GM12878 (cell line): ENCODE measurements at regions of chr12 and their contacts with region 1.

Region 1: GRCh38 chr12:124453419-124454351 is 113.7 kb downstream of the NCOR2 start:
- DNase-seq: peak; percentile 72
- ATAC-seq: peak; percentile 82
- H3K4me3 ChIP-seq: peak overlapping the region; percentile 53
- H3K27ac ChIP-seq: peak overlapping the region; percentile 95
- H3K4me1 ChIP-seq: peaks cover 55% of the 10 kb centered on the region
- H3K27me3 ChIP-seq: no peaks in the 10 kb centered on the region
- CTCF ChIP-seq: peak in 2 of 3 experiments; percentile 16 to 19; a peak in 1 of 6 replicates
- EP300 ChIP-seq: peak in 1 of 2 experiments; percentile 62; a peak in 1 of 4 replicates
- POLR2A ChIP-seq: peak; percentile 78
- RAD21 ChIP-seq: 0 out of 2 replicates have a peak, but pooled peaks have one; percentile 17

Region 2: GRCh38 chr12:124264089-124264795 is 189.4 kb before region 1 on chr12:
- CTCF ChIA-PET with region 1: no interaction called
- POLR2A ChIA-PET with region 1: no interaction called
- RAD21 ChIA-PET with region 1: no interaction called
- SMC1A ChIA-PET with region 1: no interaction called
- in situ Hi-C with region 1: no loop called
- intact Hi-C with region 1: no loop called
- DNase-seq: no peak
- ATAC-seq: no peak
- H3K4me3 ChIP-seq: no peak overlapping the region
- H3K27ac ChIP-seq: no peak overlapping the region
- H3K4me1 ChIP-seq: no peaks in the 10 kb centered on the region
- H3K27me3 ChIP-seq: peaks cover 0 to 1% of the 10 kb centered on the region in 2 experiments; a peak in 1 of 4 replicates
- CTCF ChIP-seq: no peak
- EP300 ChIP-seq: no peak
- POLR2A ChIP-seq: no peak
- RAD21 ChIP-seq: no peak

Region 3: GRCh38 chr12:124466216-124467128 is 12.8 kb after region 1 on chr12:
- CTCF ChIA-PET with region 1: interaction called, 13 read pairs
- POLR2A ChIA-PET with region 1: interaction called, 4 read pairs
- RAD21 ChIA-PET with region 1: interaction called, 16 read pairs
- SMC1A ChIA-PET with region 1: interaction called, 3 read pairs
- in situ Hi-C with region 1: no loop called
- intact Hi-C with region 1: no loop called
- DNase-seq: no peak
- ATAC-seq: peak; percentile 99
- H3K4me3 ChIP-seq: no peak overlapping the region; the same call in 1 of the 2 replicates
- H3K27ac ChIP-seq: peak overlapping the region; percentile 82
- H3K4me1 ChIP-seq: peaks cover 17% of the 10 kb centered on the region
- H3K27me3 ChIP-seq: no peaks in the 10 kb centered on the region
- CTCF ChIP-seq: peak; percentile 39 to 48 (median 39); a peak in 5 of 6 replicates
- EP300 ChIP-seq: 0 out of 4 replicates have a peak, but pooled peaks of 1 of the 2 experiments have one; percentile 23
- POLR2A ChIP-seq: peak; percentile 71
- RAD21 ChIP-seq: peak; percentile 51

Region 4: GRCh38 chr12:124545508-124546418 is 92.1 kb after region 1 on chr12:
- CTCF ChIA-PET with region 1: no interaction called
- POLR2A ChIA-PET with region 1: no interaction called
- RAD21 ChIA-PET with region 1: interaction called, 10 read pairs
- SMC1A ChIA-PET with region 1: interaction called, 8 read pairs
- in situ Hi-C with region 1: no loop called
- intact Hi-C with region 1: no loop called
- DNase-seq: peak; percentile 76
- ATAC-seq: peak; percentile 95
- H3K4me3 ChIP-seq: peak overlapping the region; percentile 59
- H3K27ac ChIP-seq: peak overlapping the region; percentile 90
- H3K4me1 ChIP-seq: peaks cover 70% of the 10 kb centered on the region
- H3K27me3 ChIP-seq: no peaks in the 10 kb centered on the region
- CTCF ChIP-seq: no peak
- EP300 ChIP-seq: peak; percentile 61 to 72; a peak in 3 of 4 replicates
- POLR2A ChIP-seq: peak; percentile 37; the same call in 1 of the 2 replicates
- RAD21 ChIP-seq: no peak

Region 5: GRCh38 chr12:124680863-124681778 is 227.4 kb after region 1 on chr12:
- CTCF ChIA-PET with region 1: no interaction called
- POLR2A ChIA-PET with region 1: no interaction called
- RAD21 ChIA-PET with region 1: no interaction called
- SMC1A ChIA-PET with region 1: no interaction called
- in situ Hi-C with region 1: no loop called
- intact Hi-C with region 1: loop called (anchors 10 kb)
- DNase-seq: peak; percentile 71
- ATAC-seq: peak; percentile 94
- H3K4me3 ChIP-seq: no peak overlapping the region
- H3K27ac ChIP-seq: no peak overlapping the region
- H3K4me1 ChIP-seq: peaks cover 18% of the 10 kb centered on the region
- H3K27me3 ChIP-seq: 0 out of 4 replicates have a peak, but pooled peaks cover 0 to 3% of the 10 kb centered on the region in 2 experiments
- CTCF ChIP-seq: peak; percentile 37 to 67 (median 53); a peak in 5 of 6 replicates
- EP300 ChIP-seq: peak; percentile 44 to 82; a peak in 2 of 4 replicates
- POLR2A ChIP-seq: no peak
- RAD21 ChIP-seq: peak; percentile 75